HepG2 (cell line): ENCODE measurements at regions of chr7 and their contacts with region 1.

Region 1: GRCh38 chr7:112400141-112400540 is 50.1 kb upstream of the IFRD1 start:
- DNase-seq: no peak
- ATAC-seq: no peak
- H3K4me3 ChIP-seq: no peak overlapping the region
- H3K27ac ChIP-seq: no peak overlapping the region
- H3K4me1 ChIP-seq: no peaks in the 10 kb centered on the region
- H3K27me3 ChIP-seq: peaks cover 0 to 7% of the 10 kb centered on the region in 2 experiments; a peak in 2 of 5 replicates
- CTCF ChIP-seq: no peak
- EP300 ChIP-seq: no peak
- POLR2A ChIP-seq: no peak
- RAD21 ChIP-seq: no peak

Region 2: GRCh38 chr7:111953611-111954010 is 446.5 kb before region 1 on chr7:
- CTCF ChIA-PET with region 1: no interaction called
- POLR2A ChIA-PET with region 1: no interaction called
- in situ Hi-C with region 1: loop called (anchors 10 kb)
- intact Hi-C with region 1: no loop called
- DNase-seq: peak; percentile 77
- ATAC-seq: peak; percentile 98
- H3K4me3 ChIP-seq: no peak overlapping the region
- H3K27ac ChIP-seq: no peak overlapping the region
- H3K4me1 ChIP-seq: peaks cover 16% of the 10 kb centered on the region
- H3K27me3 ChIP-seq: no peaks in the 10 kb centered on the region
- CTCF ChIP-seq: peak; percentile 73
- EP300 ChIP-seq: no peak
- POLR2A ChIP-seq: no peak
- RAD21 ChIP-seq: no peak

Region 3: GRCh38 chr7:112080441-112080840 is 319.7 kb before region 1 on chr7:
- CTCF ChIA-PET with region 1: no interaction called
- POLR2A ChIA-PET with region 1: no interaction called
- in situ Hi-C with region 1: no loop called
- intact Hi-C with region 1: loop called (anchors 10 kb)
- DNase-seq: peak; percentile 47
- ATAC-seq: no peak
- H3K4me3 ChIP-seq: no peak overlapping the region
- H3K27ac ChIP-seq: no peak overlapping the region
- H3K4me1 ChIP-seq: peaks cover 44% of the 10 kb centered on the region
- H3K27me3 ChIP-seq: no peaks in the 10 kb centered on the region
- CTCF ChIP-seq: no peak
- EP300 ChIP-seq: 0 out of 4 replicates have a peak, but pooled peaks of 1 of the 2 experiments have one; percentile 8
- POLR2A ChIP-seq: no peak
- RAD21 ChIP-seq: no peak

Region 4: GRCh38 chr7:112414855-112415490 is 14.8 kb after region 1 on chr7:
- CTCF ChIA-PET with region 1: no interaction called
- POLR2A ChIA-PET with region 1: no interaction called
- in situ Hi-C with region 1: no loop called
- intact Hi-C with region 1: no loop called
- DNase-seq: peak; percentile 42
- ATAC-seq: peak; percentile 80
- H3K4me3 ChIP-seq: no peak overlapping the region
- H3K27ac ChIP-seq: no peak overlapping the region
- H3K4me1 ChIP-seq: peaks cover 32% of the 10 kb centered on the region
- H3K27me3 ChIP-seq: no peaks in the 10 kb centered on the region
- CTCF ChIP-seq: peak; percentile 75
- EP300 ChIP-seq: no peak
- POLR2A ChIP-seq: no peak
- RAD21 ChIP-seq: peak; percentile 36; the same call in 1 of the 2 replicates